Panc1 (cell line): ENCODE measurements at regions of chr1 and their contacts with region 1.

Region 1: GRCh38 chr1:62539028-62539447 is 58.3 kb upstream of the ANGPTL3 start:
- DNase-seq: no peak
- ATAC-seq: no peak
- H3K4me3 ChIP-seq: no peak overlapping the region
- H3K27ac ChIP-seq: no peak overlapping the region
- H3K4me1 ChIP-seq: no peaks in the 10 kb centered on the region
- H3K27me3 ChIP-seq: no peaks in the 10 kb centered on the region
- CTCF ChIP-seq: no peak

Region 2: GRCh38 chr1:62337706-62338631 is 201.1 kb before region 1 on chr1:
- CTCF ChIA-PET with region 1: no interaction called
- POLR2A ChIA-PET with region 1: no interaction called
- in situ Hi-C with region 1: no loop called
- intact Hi-C with region 1: no loop called
- DNase-seq: no peak
- ATAC-seq: no peak
- H3K4me3 ChIP-seq: no peak overlapping the region
- H3K27ac ChIP-seq: no peak overlapping the region
- H3K4me1 ChIP-seq: no peaks in the 10 kb centered on the region
- H3K27me3 ChIP-seq: no peaks in the 10 kb centered on the region
- CTCF ChIP-seq: no peak

Region 3: DNA sequence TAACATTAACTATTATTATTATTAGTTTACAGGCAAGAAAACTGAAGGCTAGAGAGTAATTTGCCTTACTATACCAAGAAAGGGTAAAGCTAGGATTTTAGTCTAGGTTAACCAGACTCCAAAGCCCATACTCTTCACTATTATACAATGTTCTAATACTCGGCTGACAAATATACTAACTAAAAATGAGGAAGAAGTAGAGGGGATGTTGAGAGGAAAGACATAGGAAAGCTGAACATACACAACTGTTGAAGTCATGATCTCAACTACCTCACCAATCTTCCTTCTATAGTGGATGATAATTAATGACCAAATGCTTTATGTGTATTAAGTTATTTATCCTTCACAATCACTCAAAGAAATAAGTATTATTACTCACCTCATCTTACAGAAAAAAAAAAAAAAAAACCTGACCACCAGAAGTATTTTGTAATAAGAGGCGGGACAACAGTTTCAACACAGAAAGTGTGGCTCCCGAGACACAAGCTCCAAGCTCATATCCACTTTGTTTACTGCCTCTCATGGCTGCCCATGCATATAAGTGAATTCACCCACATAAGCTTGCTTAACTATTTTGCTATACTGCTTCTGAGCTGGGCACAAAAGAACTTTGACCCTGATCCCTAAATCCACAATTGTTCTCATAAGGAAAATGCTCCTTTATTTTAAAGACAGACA is 24.2 kb before region 1 on chr1:
- CTCF ChIA-PET with region 1: no interaction called
- POLR2A ChIA-PET with region 1: no interaction called
- in situ Hi-C with region 1: no loop called
- intact Hi-C with region 1: no loop called
- DNase-seq: no peak
- ATAC-seq: no peak
- H3K4me3 ChIP-seq: no peak overlapping the region
- H3K27ac ChIP-seq: no peak overlapping the region
- H3K4me1 ChIP-seq: no peaks in the 10 kb centered on the region
- H3K27me3 ChIP-seq: no peaks in the 10 kb centered on the region
- CTCF ChIP-seq: no peak

Region 4: GRCh38 chr1:62573675-62574074 is 34.6 kb after region 1 on chr1:
- CTCF ChIA-PET with region 1: no interaction called
- POLR2A ChIA-PET with region 1: interaction called, 16 read pairs
- in situ Hi-C with region 1: no loop called
- intact Hi-C with region 1: no loop called
- DNase-seq: no peak
- ATAC-seq: no peak
- H3K4me3 ChIP-seq: no peak overlapping the region
- H3K27ac ChIP-seq: no peak overlapping the region
- H3K4me1 ChIP-seq: no peaks in the 10 kb centered on the region
- H3K27me3 ChIP-seq: no peaks in the 10 kb centered on the region
- CTCF ChIP-seq: no peak